WTC11 (cell line): ENCODE measurements at regions of chr1 and their contacts with region 1.

Region 1: GRCh38 chr1:118987468-118988185 is 516 bp downstream of the TBX15 start:
- DNase-seq: peak; percentile 66
- ATAC-seq: peak; percentile 18
- H3K4me3 Mint-ChIP-seq: peak overlapping the region; percentile 74
- H3K27ac Mint-ChIP-seq: no peak overlapping the region
- H3K4me1 Mint-ChIP-seq: peaks cover 89% of the 10 kb centered on the region
- H3K27me3 Mint-ChIP-seq: peaks cover 100% of the 10 kb centered on the region
- CTCF ChIP-seq: no peak

Region 2: GRCh38 chr1:118973531-118974137 is 14.0 kb before region 1 on chr1:
- CTCF ChIA-PET with region 1: no interaction called
- POLR2A ChIA-PET with region 1: no interaction called
- DNase-seq: no peak
- ATAC-seq: no peak
- H3K4me3 Mint-ChIP-seq: no peak overlapping the region
- H3K27ac Mint-ChIP-seq: no peak overlapping the region
- H3K4me1 Mint-ChIP-seq: 0 out of 2 replicates have a peak, but pooled peaks cover 3% of the 10 kb centered on the region
- H3K27me3 Mint-ChIP-seq: peaks cover 69% of the 10 kb centered on the region
- CTCF ChIP-seq: no peak

Region 3: GRCh38 chr1:119001181-119002018 is 13.8 kb after region 1 on chr1:
- CTCF ChIA-PET with region 1: interaction called, 20 read pairs
- POLR2A ChIA-PET with region 1: interaction called, 6 read pairs
- DNase-seq: no peak
- ATAC-seq: peak; percentile 19
- H3K4me3 Mint-ChIP-seq: peak overlapping the region; percentile 68
- H3K27ac Mint-ChIP-seq: no peak overlapping the region
- H3K4me1 Mint-ChIP-seq: peaks cover 68% of the 10 kb centered on the region
- H3K27me3 Mint-ChIP-seq: peaks cover 100% of the 10 kb centered on the region
- CTCF ChIP-seq: no peak